H1 (cell line): ENCODE measurements at regions of chr4 and their contacts with region 1.

Region 1: DNA sequence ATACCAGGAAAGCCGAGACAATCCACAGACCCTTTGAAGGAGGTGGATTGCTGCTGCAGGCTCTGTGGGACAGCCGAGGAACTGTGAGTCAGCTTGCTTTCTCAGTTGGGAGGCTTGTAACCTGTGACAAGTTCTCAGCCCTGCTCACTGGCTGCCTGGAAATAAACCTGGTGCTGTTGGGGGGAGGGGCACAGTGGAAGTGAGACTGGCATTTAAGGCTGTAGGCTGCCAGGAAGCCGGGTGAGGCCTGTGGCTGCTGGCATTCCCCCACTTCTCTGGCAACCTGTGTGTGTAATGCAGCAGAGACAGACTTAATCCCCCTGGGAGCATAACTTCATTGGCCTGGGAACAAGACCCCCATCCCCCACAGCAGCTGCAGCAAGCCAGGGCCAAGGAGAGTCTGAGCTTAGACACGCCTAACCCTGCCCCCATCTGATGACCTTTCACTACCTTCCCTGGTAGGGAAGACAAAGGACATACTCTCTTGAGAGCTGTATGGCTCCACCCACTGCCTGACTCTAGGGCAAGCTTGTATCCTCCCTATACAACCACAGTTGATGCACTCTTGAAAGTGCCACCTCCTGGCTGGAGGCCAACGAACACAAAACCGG is 64.1 kb downstream of the ALPK1 start:
- DNase-seq: peak; percentile 44 to 68
- H3K4me3 ChIP-seq: peak overlapping the region in 2 of 4 experiments; percentile 10 to 36; a peak in 2 of 8 replicates
- H3K27ac ChIP-seq: peak overlapping the region; percentile 61
- H3K4me1 ChIP-seq: peaks cover 3 to 10% (median 6%) of the 10 kb centered on the region in 4 experiments; a peak in 6 of 7 replicates
- H3K27me3 ChIP-seq: no peaks in the 10 kb centered on the region
- CTCF ChIP-seq: peak; percentile 6 to 38 (median 35)
- EP300 ChIP-seq: peak in 1 of 2 experiments; percentile 84; a peak in 1 of 3 replicates
- POLR2A ChIP-seq: peak in 1 of 2 experiments; percentile 67; a peak in 1 of 3 replicates
- RAD21 ChIP-seq: peak; percentile 11 to 34; a peak in 2 of 4 replicates

Region 2: GRCh38 chr4:112318239-112319142 is 42.8 kb before region 1 on chr4:
- CTCF ChIA-PET with region 1: no interaction called
- POLR2A ChIA-PET with region 1: no interaction called
- DNase-seq: no peak
- H3K4me3 ChIP-seq: no peak overlapping the region
- H3K27ac ChIP-seq: no peak overlapping the region
- H3K4me1 ChIP-seq: no peaks in the 10 kb centered on the region
- H3K27me3 ChIP-seq: no peaks in the 10 kb centered on the region; a peak in 1 of 7 replicates
- CTCF ChIP-seq: no peak
- EP300 ChIP-seq: no peak
- POLR2A ChIP-seq: no peak
- RAD21 ChIP-seq: no peak

Region 3: GRCh38 chr4:112348488-112349158 is 12.7 kb before region 1 on chr4:
- CTCF ChIA-PET with region 1: interaction called, 23 read pairs
- POLR2A ChIA-PET with region 1: interaction called, 3 read pairs
- DNase-seq: peak in 1 of 2 experiments; percentile 63
- H3K4me3 ChIP-seq: no peak overlapping the region
- H3K27ac ChIP-seq: no peak overlapping the region
- H3K4me1 ChIP-seq: peaks cover 0 to 2% (median under 1%) of the 10 kb centered on the region in 4 experiments; a peak in 3 of 7 replicates
- H3K27me3 ChIP-seq: no peaks in the 10 kb centered on the region
- CTCF ChIP-seq: peak; percentile 60 to 69 (median 64)
- EP300 ChIP-seq: no peak
- POLR2A ChIP-seq: no peak
- RAD21 ChIP-seq: peak; percentile 56 to 67

Region 4: GRCh38 chr4:112377171-112377570 is 15.9 kb after region 1 on chr4:
- CTCF ChIA-PET with region 1: interaction called, 21 read pairs
- POLR2A ChIA-PET with region 1: interaction called, 11 read pairs
- DNase-seq: no peak
- H3K4me3 ChIP-seq: no peak overlapping the region
- H3K27ac ChIP-seq: no peak overlapping the region
- H3K4me1 ChIP-seq: peaks cover 0 to 5% (median 2%) of the 10 kb centered on the region in 4 experiments; a peak in 4 of 7 replicates
- H3K27me3 ChIP-seq: peaks cover 0 to 14% (median 10%) of the 10 kb centered on the region in 4 experiments; a peak in 4 of 7 replicates
- CTCF ChIP-seq: no peak
- EP300 ChIP-seq: no peak
- POLR2A ChIP-seq: no peak
- RAD21 ChIP-seq: no peak